ENCODE measurements at regions of chr4 and their contacts with region 1.

Region 1: GRCh38 chr4:105471566-105472176 is 2.2 kb downstream of the PPA2 start:
- DNase-seq: no peak
- H3K4me3 ChIP-seq: no peak overlapping the region; the same call in 1 of the 2 replicates
- CTCF ChIP-seq: peak; percentile 67

Region 2: GRCh38 chr4:104930298-104930697 is 541.4 kb before region 1 on chr4:
- CTCF ChIA-PET with region 1: interaction called, 14 read pairs
- POLR2A ChIA-PET with region 1: no interaction called
- DNase-seq: no peak
- H3K4me3 ChIP-seq: no peak overlapping the region
- CTCF ChIP-seq: no peak

Region 3: DNA sequence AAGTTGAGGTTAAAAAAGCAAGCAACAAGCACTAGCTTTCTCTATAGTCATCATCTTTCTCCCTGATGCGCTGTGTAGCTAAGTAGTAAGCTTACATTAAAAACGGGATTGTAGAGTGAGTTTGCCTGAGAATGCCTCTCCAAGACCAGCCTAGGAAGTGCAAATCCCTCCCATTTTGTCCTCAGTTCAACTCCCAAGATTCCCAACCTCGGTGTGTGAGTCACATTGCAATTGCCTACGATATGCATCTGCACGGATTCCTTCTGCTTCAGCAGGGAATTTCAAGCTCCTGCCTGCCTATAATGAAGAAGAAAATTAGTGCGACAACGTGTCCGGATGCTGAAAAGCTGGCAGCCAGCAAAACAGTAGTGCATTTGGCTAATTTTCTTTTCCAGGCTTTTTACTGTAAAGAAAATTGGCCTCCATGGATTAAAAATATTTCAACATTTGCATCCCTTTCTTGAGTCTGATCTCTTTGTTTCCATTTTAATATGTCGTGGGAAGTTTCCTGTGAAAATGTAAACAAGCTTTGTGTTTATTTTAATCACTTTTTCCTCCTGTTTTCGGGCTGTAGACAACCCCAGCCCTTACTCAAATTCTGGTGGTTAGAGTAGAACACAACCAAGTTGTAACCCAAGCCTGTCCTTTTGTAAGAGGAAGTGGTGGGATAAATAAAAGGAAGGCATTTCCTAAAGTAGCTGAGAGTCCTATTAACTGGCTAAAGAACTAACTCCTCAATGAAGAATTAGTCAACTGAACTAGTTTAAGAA is 383.4 kb before region 1 on chr4:
- CTCF ChIA-PET with region 1: interaction called, 11 read pairs
- POLR2A ChIA-PET with region 1: no interaction called
- DNase-seq: peak; percentile 88
- H3K4me3 ChIP-seq: peak overlapping the region; percentile 28
- CTCF ChIP-seq: no peak

Region 4: GRCh38 chr4:105140684-105141490 is 330.8 kb before region 1 on chr4:
- CTCF ChIA-PET with region 1: interaction called, 33 read pairs
- POLR2A ChIA-PET with region 1: no interaction called
- DNase-seq: no peak
- H3K4me3 ChIP-seq: no peak overlapping the region
- CTCF ChIP-seq: peak; percentile 55

Region 5: DNA sequence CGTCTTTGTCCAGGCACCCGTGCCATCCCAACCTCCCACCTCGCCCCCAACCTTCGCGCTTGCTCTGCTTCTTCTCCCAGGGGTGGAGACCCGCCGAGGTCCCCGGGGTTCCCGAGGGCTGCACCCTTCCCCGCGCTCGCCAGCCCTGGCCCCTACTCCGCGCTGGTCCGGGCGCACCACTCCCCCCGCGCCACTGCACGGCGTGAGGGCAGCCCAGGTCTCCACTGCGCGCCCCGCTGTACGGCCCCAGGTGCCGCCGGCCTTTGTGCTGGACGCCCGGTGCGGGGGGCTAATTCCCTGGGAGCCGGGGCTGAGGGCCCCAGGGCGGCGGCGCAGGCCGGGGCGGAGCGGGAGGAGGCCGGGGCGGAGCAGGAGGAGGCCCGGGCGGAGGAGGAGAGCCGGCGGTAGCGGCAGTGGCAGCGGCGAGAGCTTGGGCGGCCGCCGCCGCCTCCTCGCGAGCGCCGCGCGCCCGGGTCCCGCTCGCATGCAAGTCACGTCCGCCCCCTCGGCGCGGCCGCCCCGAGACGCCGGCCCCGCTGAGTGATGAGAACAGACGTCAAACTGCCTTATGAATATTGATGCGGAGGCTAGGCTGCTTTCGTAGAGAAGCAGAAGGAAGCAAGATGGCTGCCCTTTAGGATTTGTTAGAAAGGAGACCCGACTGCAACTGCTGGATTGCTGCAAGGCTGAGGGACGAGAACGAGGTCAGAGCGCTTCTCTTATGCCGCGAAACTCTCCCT is 325.2 kb before region 1 on chr4 and contains the start of gene TET2:
- CTCF ChIA-PET with region 1: interaction called, 33 read pairs
- POLR2A ChIA-PET with region 1: interaction called, 12 read pairs
- DNase-seq: no peak
- H3K4me3 ChIP-seq: peak within 1 kb of the TSS; percentile 91
- CTCF ChIP-seq: peak; percentile 2

Region 6: DNA sequence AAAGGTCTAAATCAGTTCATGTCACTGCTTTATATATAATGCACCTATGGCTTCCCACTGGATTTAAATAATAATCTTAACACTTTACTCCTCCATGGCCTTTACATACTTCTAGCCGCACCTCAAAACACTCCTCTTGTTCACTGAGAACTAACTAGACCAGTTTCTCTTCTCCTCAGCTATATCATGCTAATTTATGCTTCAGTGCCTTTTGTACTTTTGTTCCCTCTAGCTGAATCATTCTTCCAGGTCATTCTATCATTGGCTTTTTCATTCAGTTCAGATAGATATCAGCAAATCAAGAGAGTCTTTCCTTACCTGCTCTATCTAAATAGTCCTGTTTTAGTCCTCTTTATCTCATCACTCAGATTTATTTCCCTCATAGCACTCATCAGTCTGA is 260.8 kb before region 1 on chr4:
- CTCF ChIA-PET with region 1: no interaction called
- POLR2A ChIA-PET with region 1: no interaction called
- DNase-seq: no peak
- H3K4me3 ChIP-seq: no peak overlapping the region
- CTCF ChIP-seq: no peak

Region 7: DNA sequence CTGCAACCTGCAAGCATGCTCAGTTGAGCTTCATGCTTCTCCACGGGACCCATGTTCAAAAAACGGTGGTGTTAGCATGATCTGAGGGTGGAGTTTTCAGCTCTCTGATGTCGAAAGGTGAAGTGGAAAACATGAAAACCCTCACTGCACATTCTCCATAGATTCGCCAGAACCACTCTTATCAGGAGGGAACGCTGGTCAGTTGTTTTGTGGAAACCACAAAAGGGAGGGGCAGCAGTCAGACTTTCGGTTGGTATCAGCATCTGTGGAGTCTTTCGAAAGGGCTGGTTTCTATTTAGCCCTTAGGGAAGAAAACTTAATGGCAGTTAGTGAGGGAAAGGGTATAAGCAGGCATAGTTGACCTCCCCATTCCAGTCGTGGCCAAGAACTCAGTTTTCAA is 10.4 kb before region 1 on chr4:
- CTCF ChIA-PET with region 1: interaction called, 24 read pairs
- POLR2A ChIA-PET with region 1: no interaction called
- DNase-seq: no peak
- H3K4me3 ChIP-seq: no peak overlapping the region
- CTCF ChIP-seq: no peak

Region 8: DNA sequence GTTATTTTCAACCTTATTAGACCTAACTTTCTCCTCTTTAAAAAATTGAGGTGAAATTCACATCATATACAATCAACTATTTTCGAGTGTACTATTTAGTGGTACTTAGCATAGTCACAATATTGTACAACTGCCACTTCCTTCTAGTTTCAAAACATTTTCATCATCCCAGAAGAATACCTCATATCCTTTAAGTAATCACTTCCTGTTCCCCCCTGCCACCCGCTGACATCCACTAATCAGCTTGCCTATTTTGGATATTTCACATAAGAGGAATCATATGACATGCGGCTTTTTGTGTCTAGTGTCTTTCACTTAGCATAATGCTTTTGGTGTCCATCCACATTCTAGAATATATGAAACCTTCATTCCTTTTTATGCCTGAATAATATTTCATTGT is 12.2 kb after region 1 on chr4:
- CTCF ChIA-PET with region 1: interaction called, 12 read pairs
- POLR2A ChIA-PET with region 1: interaction called, 3 read pairs
- DNase-seq: no peak
- H3K4me3 ChIP-seq: no peak overlapping the region
- CTCF ChIP-seq: no peak

Region 9: DNA sequence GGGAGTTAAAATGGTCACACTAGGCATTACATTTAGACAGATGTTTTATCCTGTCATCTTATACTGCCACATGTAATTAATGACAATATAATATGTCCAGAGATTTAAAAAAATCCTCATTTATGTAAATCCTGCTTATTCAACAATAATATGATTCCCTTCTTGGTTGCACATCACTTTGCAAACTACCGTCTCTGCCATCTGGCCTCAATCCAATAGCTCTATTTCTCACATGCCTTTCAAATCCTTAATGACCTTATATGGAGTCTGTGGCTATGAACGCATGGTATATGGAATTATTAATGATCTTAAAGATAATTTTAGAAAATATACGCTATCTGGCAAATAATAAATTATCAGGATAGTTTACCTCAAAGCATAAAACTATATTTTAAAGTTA is 568.1 kb after region 1 on chr4:
- CTCF ChIA-PET with region 1: no interaction called
- POLR2A ChIA-PET with region 1: no interaction called
- DNase-seq: no peak
- H3K4me3 ChIP-seq: no peak overlapping the region
- CTCF ChIP-seq: no peak